Heart right ventricle (tissue), 16 donors: ENCODE measurements at regions of chr5 and their contacts with region 1.

Region 1: DNA sequence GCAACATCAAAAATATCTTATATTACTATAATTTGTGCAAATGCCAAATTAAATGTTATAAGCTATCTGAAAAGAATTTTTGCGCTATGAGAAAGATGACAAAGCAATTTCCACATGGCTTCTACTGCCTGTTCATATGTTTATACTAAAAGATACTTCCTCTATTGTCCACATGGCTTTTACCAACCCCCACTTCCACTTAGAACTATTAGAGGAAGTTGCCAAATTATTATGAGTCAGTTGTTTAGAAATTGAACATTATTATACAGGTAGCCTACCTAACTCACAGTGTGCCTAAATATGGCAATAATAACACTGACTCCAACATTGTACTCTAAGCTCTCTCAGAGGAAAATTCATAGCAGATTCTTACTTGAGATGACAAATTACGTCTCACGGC is 37.6 kb upstream of the SLC27A6 start:
- DNase-seq: no peak
- ATAC-seq: peak in 1 of 8 donors; percentile 36
- H3K4me3 ChIP-seq: no peak overlapping the region
- H3K27ac ChIP-seq: no peak overlapping the region
- H3K4me1 ChIP-seq: peaks cover 0 to 11% (median 3%) of the 10 kb centered on the region in 9 donors
- H3K27me3 ChIP-seq: no peaks in the 10 kb centered on the region
- CTCF ChIP-seq: no peak

Region 2: GRCh38 chr5:128328446-128328845 is 599.2 kb before region 1 on chr5:
- intact Hi-C with region 1: loop called in 1 of 10 experiments (anchors 5 kb)
- DNase-seq: no peak
- ATAC-seq: peak in 5 of 8 donors; percentile 17 to 90 (median 39)
- H3K4me3 ChIP-seq: peak overlapping the region in 3 of 10 donors; percentile 12 to 17 (median 12)
- H3K27ac ChIP-seq: peak overlapping the region in 3 of 10 donors; percentile 2 to 54 (median 45)
- H3K4me1 ChIP-seq: peaks cover 0 to 18% (median 5%) of the 10 kb centered on the region in 9 donors
- H3K27me3 ChIP-seq: no peaks in the 10 kb centered on the region
- CTCF ChIP-seq: no peak

Region 3: DNA sequence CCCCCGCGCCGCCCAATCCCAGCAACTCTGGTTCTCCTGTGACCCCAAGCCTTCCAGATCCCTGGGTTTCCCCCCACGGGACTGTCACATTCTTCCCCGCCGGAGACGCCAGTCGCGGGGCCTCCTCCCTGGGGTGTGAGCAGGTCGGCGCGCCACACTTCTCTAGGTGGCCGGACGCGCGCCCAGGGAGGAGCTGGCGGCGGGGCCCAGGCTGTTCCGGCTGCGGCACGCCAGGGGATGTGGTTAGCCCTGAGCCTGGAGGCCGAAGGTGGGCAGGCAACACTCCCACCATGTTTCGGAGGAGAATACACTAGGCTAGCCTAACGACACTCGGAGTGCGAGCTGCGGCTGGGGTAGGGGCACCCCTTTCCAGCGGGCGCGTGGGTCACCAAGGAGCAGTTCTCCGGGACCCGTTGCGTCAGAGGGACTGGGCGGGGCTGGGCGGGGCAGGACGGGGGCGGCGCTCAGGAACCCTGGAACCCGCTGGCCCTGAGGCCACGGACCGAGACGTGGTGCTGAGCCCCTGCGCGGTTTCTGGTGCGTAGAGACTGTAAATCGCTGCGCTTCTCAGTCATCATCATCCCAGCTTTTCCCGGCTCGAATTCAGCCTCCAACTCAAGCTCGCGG is 37.5 kb after region 1 on chr5 and contains the start of gene SLC27A6:
- intact Hi-C with region 1: loop called in 3 of 10 experiments (anchors 5 to 10 kb)
- DNase-seq: peak; percentile 30 to 54
- ATAC-seq: peak; percentile 87 to 99 (median 96)
- H3K4me3 ChIP-seq: peak within 1 kb of the TSS; percentile 23 to 63 (median 54)
- H3K27ac ChIP-seq: peak within 1 kb of the TSS; percentile 6 to 85 (median 78)
- H3K4me1 ChIP-seq: peaks cover 0 to 5% (median 0%) of the 10 kb centered on the region in 9 donors
- H3K27me3 ChIP-seq: peaks cover 0 to 29% (median 15%) of the 10 kb centered on the region in 7 donors
- CTCF ChIP-seq: no peak
- total RNA-seq, gene SLC27A6: 36.5 to 125 (median 61.4) TPM